ENCODE measurements at regions of chr16 and their contacts with region 1.

Region 1: GRCh38 chr16:21009815-21010214 is 109.2 kb downstream of the LYRM1 start:
- DNase-seq: no peak
- H3K4me3 ChIP-seq: no peak overlapping the region
- H3K4me3 Mint-ChIP-seq: no peak overlapping the region
- H3K27ac ChIP-seq: no peak overlapping the region
- H3K27ac Mint-ChIP-seq: peak overlapping the region in 1 of 7 donors; percentile 25
- H3K4me1 ChIP-seq: no peaks in the 10 kb centered on the region
- H3K4me1 Mint-ChIP-seq: no peaks in the 10 kb centered on the region
- H3K27me3 ChIP-seq: no peaks in the 10 kb centered on the region
- H3K27me3 Mint-ChIP-seq: peaks cover 0 to 10% (median 5%) of the 10 kb centered on the region in 3 donors
- CTCF ChIP-seq: no peak

Region 2: GRCh38 chr16:21075252-21075651 is 65.4 kb after region 1 on chr16:
- intact Hi-C with region 1: loop called in 1 of 2 experiments (anchors 10 kb)
- DNase-seq: no peak
- H3K4me3 ChIP-seq: no peak overlapping the region
- H3K4me3 Mint-ChIP-seq: no peak overlapping the region
- H3K27ac ChIP-seq: no peak overlapping the region
- H3K27ac Mint-ChIP-seq: peak overlapping the region in 1 of 7 donors; percentile 51
- H3K4me1 ChIP-seq: no peaks in the 10 kb centered on the region
- H3K4me1 Mint-ChIP-seq: peaks cover 6% of the 10 kb centered on the region
- H3K27me3 ChIP-seq: no peaks in the 10 kb centered on the region
- H3K27me3 Mint-ChIP-seq: peaks cover 0 to 4% (median 0%) of the 10 kb centered on the region in 3 donors
- CTCF ChIP-seq: no peak

Measured in CD14-positive monocyte (primary cell).